ENCODE measurements at regions of chr7 and their contacts with region 1.

Region 1: DNA sequence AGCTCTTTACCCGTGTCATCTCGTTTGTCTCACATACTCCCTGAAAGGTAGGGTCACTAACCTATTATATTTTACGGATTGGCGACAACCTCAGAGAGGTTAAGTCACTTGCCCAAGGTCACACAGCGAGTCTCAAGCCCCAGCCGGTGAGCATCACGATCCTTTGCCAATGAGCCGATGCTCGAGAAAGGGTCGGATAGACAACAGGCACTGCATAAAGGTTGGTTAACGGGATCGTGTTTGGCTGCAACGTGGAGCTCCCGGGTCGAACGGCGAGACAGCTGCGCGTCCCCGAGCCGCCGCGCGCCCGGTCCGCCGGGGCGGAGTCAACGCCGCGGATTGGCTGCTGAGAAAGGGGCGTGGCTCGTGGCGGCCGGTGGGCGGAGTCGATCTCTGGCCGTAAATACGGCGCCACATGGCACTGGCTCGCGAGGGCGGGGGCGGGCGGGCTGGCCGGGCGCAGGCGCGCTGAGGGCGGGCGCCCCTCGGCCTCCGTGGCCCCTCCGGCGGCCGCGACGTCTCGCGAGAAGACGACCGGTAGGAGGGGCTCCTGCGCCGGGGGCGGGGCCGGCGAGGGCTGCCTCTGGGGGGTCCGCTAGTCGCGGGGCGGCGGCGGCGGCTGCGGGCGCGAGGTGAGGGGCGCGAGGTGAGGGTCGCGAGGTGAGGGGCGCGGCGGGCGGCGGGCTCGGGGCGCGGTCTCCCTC is at the start of gene CHST12:
- DNase-seq: peak; percentile 79 to 98
- H3K4me3 ChIP-seq: peak within 1 kb of the TSS; percentile 74
- H3K27ac ChIP-seq: no peak within 1 kb of the TSS
- H3K4me1 ChIP-seq: peaks cover 29% of the 10 kb centered on the region
- H3K27me3 ChIP-seq: no peaks in the 10 kb centered on the region
- CTCF ChIP-seq: no peak
- total RNA-seq, gene CHST12: 25.9 and 41.1 TPM in 2 replicates

Region 2: GRCh38 chr7:2381881-2382509 is 21.2 kb before region 1 on chr7:
- CTCF ChIA-PET with region 1: interaction called, 11 read pairs
- POLR2A ChIA-PET with region 1: interaction called, 10 read pairs
- intact Hi-C with region 1: no loop called
- DNase-seq: no peak
- H3K4me3 ChIP-seq: no peak overlapping the region
- H3K27ac ChIP-seq: no peak overlapping the region
- H3K4me1 ChIP-seq: no peaks in the 10 kb centered on the region
- H3K27me3 ChIP-seq: no peaks in the 10 kb centered on the region
- CTCF ChIP-seq: no peak

Region 3: GRCh38 chr7:2440608-2441245 is 37.6 kb after region 1 on chr7:
- CTCF ChIA-PET with region 1: no interaction called
- POLR2A ChIA-PET with region 1: no interaction called
- intact Hi-C with region 1: loop called (anchors 1 kb)
- DNase-seq: peak; percentile 82 to 98
- H3K4me3 ChIP-seq: peak overlapping the region; percentile 32; the same call in 1 of the 2 replicates
- H3K27ac ChIP-seq: peak overlapping the region; percentile 86
- H3K4me1 ChIP-seq: peaks cover 56% of the 10 kb centered on the region
- H3K27me3 ChIP-seq: no peaks in the 10 kb centered on the region
- CTCF ChIP-seq: no peak

Region 4: DNA sequence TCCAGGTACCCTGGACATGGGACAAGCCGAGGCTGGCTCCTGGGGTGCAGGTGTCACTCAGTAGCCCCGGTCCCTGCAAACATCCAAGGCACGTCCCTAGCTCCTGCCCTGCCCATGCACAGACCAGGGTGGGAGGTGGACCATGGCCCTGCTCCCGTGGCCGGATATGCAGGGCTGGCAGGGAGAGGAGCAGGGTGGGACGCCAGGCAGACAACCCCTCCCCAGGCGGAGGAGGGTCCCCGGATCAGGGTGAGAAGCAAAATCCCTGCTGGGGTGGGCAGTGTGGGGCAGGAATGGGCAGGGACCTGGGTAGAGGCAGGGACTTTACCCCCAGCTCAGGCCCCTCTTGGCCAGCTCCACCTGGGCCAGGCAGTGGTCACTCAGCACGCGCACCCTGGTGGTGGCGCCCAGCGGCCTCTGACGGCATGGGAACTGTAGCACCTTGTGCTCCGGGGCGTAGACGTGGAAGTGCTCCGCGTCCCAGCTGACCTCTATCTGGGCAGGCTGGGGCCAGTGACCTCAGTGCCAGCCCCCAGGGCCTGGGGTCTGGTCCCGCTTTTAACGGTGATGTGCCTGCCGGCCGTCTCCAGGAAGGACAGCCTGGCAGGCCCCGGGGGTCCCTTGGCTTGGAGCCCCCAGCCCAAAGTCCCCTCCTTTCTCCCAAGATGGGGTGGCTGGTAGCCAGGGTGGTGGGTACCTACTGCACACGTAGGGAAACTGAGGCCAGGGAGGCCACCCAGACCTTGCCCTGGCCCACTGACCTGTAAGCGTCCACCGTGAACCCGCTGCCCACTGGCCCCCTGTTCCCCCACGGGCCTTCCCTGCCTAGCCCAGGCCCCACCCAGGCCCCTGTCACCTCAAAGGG is 71.9 kb after region 1 on chr7:
- CTCF ChIA-PET with region 1: no interaction called
- POLR2A ChIA-PET with region 1: no interaction called
- intact Hi-C with region 1: no loop called
- DNase-seq: no peak
- H3K4me3 ChIP-seq: no peak overlapping the region
- H3K27ac ChIP-seq: no peak overlapping the region
- H3K4me1 ChIP-seq: peaks cover 13% of the 10 kb centered on the region
- H3K27me3 ChIP-seq: peaks cover 3% of the 10 kb centered on the region; the same call in 1 of the 2 replicates
- CTCF ChIP-seq: 0 out of 2 replicates have a peak, but pooled peaks have one; percentile 15

Region 5: DNA sequence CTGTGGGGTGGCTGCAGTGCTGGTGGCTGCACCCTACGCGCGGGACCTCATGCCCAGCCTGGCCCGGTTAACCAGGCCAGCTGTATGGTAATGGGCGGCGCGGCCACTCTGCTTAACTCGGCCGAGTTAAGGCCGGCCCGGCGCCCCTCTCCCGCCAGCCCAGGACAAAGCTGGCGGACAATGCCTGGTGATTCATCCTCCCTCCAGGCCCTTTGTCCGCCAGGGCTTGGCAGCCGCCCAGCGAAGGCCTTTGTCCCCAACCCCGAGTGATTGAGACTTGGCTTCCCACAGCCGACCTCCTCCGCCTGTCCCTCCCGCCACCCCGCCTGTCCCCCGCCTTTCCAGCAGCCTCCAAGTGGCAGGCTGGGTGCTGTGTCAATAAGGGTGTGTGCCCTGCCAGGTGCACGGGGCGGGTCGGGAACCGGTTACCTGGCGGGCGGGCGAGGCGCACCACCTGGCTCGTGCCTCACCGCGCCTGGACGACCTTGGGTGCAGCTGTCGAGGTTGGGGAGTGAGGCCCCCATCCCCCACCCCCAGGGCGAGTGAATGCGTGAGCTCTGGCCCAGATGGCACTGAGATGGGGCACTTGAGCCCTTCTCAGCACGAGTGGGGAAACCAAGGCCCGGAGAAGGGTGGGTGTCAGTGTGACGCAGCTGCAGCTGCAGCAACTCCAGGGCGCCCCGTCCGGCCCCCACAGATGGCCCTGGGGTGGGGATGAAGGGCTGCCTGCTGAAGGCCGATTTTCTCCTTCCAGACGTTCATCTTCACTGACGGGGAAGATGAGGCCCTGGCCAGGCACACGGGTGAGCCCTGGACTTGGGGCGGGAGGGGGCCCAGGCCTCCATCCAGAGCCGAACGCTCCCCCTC is 121.0 kb after region 1 on chr7:
- CTCF ChIA-PET with region 1: no interaction called
- POLR2A ChIA-PET with region 1: no interaction called
- intact Hi-C with region 1: loop called (anchors 2 kb)
- DNase-seq: peak; percentile 97 to 99
- H3K4me3 ChIP-seq: peak overlapping the region; percentile 37; the same call in 1 of the 2 replicates
- H3K27ac ChIP-seq: peak overlapping the region; percentile 75
- H3K4me1 ChIP-seq: peaks cover 89% of the 10 kb centered on the region
- H3K27me3 ChIP-seq: no peaks in the 10 kb centered on the region
- CTCF ChIP-seq: no peak

Region 6: DNA sequence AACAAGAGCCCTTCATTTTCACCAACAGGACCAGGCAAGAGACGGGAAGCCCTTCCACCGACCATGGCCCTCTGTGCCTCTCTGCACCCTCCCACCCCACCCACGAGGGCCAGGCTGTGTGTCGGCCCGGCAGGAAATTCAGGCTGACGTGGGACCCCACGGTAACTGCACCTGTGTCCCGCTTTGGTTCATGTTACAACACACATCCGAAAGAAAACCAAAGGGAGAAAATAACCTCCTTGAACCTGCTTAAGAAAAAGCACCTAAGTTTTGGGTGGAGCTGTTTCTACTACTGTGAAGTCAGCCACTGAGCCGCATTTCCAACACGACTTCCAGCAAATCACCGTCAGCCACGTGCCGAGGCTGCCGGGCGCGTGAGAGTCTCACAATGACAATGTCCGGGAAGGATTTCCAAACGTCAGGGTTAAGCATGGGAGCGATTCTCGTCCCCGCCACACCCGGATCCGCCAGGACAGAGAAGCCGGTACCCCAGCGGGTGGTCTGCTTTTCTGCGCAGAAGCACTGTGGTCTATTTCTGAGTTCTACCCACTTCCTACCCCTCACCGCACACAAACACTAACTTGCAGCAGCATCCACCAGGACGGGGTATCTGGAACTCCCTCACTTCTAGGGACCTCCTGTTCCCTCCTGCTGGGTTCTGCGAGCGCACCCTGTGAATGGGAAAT is 321.4 kb after region 1 on chr7:
- CTCF ChIA-PET with region 1: no interaction called
- POLR2A ChIA-PET with region 1: interaction called, 12 read pairs
- intact Hi-C with region 1: no loop called
- DNase-seq: no peak
- H3K4me3 ChIP-seq: no peak overlapping the region
- H3K27ac ChIP-seq: no peak overlapping the region
- H3K4me1 ChIP-seq: no peaks in the 10 kb centered on the region
- H3K27me3 ChIP-seq: no peaks in the 10 kb centered on the region
- CTCF ChIP-seq: no peak

Region 7: DNA sequence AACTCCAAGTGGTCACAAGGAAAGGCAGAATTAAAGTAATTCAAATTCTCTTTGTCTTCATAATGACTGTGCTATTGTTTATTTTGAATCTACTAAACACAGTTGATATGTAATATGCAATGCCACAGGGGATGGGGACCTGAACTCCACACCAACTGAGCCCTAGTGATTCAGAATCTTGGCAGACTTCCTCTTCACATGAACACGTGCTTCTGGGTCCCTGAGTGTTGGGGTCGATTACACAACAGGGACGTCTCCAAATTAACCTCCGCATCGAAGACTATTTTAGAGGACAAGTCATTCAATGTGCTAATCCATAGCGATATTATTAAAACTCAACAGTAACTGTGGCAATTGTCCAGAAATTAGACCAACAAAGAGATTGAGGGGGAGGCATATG is 735.8 kb after region 1 on chr7:
- CTCF ChIA-PET with region 1: no interaction called
- POLR2A ChIA-PET with region 1: no interaction called
- intact Hi-C with region 1: no loop called
- DNase-seq: no peak
- H3K4me3 ChIP-seq: no peak overlapping the region
- H3K27ac ChIP-seq: no peak overlapping the region
- H3K4me1 ChIP-seq: no peaks in the 10 kb centered on the region
- H3K27me3 ChIP-seq: no peaks in the 10 kb centered on the region
- CTCF ChIP-seq: no peak